ENCODE measurements at regions of chr9 and their contacts with region 1.

Region 1: GRCh38 chr9:71249729-71250317 is 128.4 kb upstream of the TRPM3 start:
- DNase-seq: peak; percentile 75
- H3K27ac ChIP-seq: no peak overlapping the region
- CTCF ChIP-seq: peak; percentile 83

Region 2: GRCh38 chr9:70639853-70640814 is 609.7 kb before region 1 on chr9:
- CTCF ChIA-PET with region 1: interaction called, 21 read pairs
- POLR2A ChIA-PET with region 1: no interaction called
- DNase-seq: peak; percentile 46
- H3K27ac ChIP-seq: no peak overlapping the region
- CTCF ChIP-seq: peak; percentile 63

Region 3: DNA sequence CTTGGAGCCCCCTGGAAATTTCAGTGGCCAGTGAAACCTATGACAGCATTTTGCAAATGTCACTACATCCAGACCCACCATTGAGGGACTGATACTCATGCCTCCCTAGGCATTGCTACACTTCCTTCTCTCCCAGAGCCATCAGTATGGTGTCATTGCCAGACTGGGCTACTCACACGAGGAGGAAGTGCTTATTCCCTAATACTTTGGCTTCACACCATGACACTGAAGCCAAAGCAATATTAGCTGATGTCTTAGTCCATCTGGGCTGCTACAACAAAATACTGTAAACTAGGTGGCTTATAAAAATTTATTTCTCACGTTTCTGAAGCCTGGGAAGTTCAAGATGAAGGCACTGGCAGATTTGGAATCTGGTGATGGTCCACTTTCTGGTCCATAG is 151.0 kb before region 1 on chr9:
- CTCF ChIA-PET with region 1: no interaction called
- POLR2A ChIA-PET with region 1: no interaction called
- DNase-seq: no peak
- H3K27ac ChIP-seq: no peak overlapping the region
- CTCF ChIP-seq: no peak

Region 4: GRCh38 chr9:71270554-71270953 is 20.7 kb after region 1 on chr9:
- CTCF ChIA-PET with region 1: no interaction called
- POLR2A ChIA-PET with region 1: no interaction called
- DNase-seq: no peak
- H3K27ac ChIP-seq: no peak overlapping the region
- CTCF ChIP-seq: no peak